A549 (cell line): ENCODE measurements at regions of chr4 and their contacts with region 1.

Region 1: GRCh38 chr4:47463235-47463956 is at the start of gene COMMD8:
- DNase-seq: peak; percentile 77 to 92
- ATAC-seq: peak; percentile 97 to 98
- H3K4me3 ChIP-seq: peak within 1 kb of the TSS; percentile 64
- H3K27ac ChIP-seq: peak within 1 kb of the TSS; percentile 94 to 97
- H3K4me1 ChIP-seq: no peaks in the 10 kb centered on the region
- CTCF ChIP-seq: no peak
- EP300 ChIP-seq: no peak
- POLR2A ChIP-seq: peak; percentile 71
- RAD21 ChIP-seq: no peak
- polyA plus RNA-seq, gene COMMD8: 17.6 and 24.0 TPM in 2 replicates

Region 2: GRCh38 chr4:47485047-47485692 is 21.8 kb after region 1 on chr4 and contains the start of gene ATP10D:
- CTCF ChIA-PET with region 1: interaction called, 6 read pairs
- POLR2A ChIA-PET with region 1: interaction called, 18 read pairs
- DNase-seq: peak; percentile 62 to 88
- ATAC-seq: peak; percentile 100
- H3K4me3 ChIP-seq: peak within 1 kb of the TSS; percentile 71
- H3K27ac ChIP-seq: peak within 1 kb of the TSS; percentile 79 to 92
- H3K4me1 ChIP-seq: no peaks in the 10 kb centered on the region
- CTCF ChIP-seq: no peak
- EP300 ChIP-seq: no peak
- POLR2A ChIP-seq: peak; percentile 71
- RAD21 ChIP-seq: no peak; a peak in 1 of 5 replicates
- polyA plus RNA-seq, gene ATP10D: 6.3 and 6.8 TPM in 2 replicates

Region 3: GRCh38 chr4:47519239-47519883 is 56.0 kb after region 1 on chr4:
- CTCF ChIA-PET with region 1: no interaction called
- POLR2A ChIA-PET with region 1: no interaction called
- DNase-seq: no peak
- ATAC-seq: no peak
- H3K4me3 ChIP-seq: no peak overlapping the region
- H3K27ac ChIP-seq: no peak overlapping the region
- H3K4me1 ChIP-seq: no peaks in the 10 kb centered on the region
- CTCF ChIP-seq: no peak
- EP300 ChIP-seq: no peak
- POLR2A ChIP-seq: no peak
- RAD21 ChIP-seq: no peak

Region 4: GRCh38 chr4:47763279-47763678 is 299.9 kb after region 1 on chr4:
- CTCF ChIA-PET with region 1: no interaction called
- POLR2A ChIA-PET with region 1: no interaction called
- DNase-seq: no peak
- ATAC-seq: no peak
- H3K4me3 ChIP-seq: no peak overlapping the region
- H3K27ac ChIP-seq: no peak overlapping the region
- H3K4me1 ChIP-seq: no peaks in the 10 kb centered on the region
- CTCF ChIP-seq: no peak
- EP300 ChIP-seq: no peak
- POLR2A ChIP-seq: no peak
- RAD21 ChIP-seq: no peak

Region 5: GRCh38 chr4:47786958-47787370 is 323.6 kb after region 1 on chr4:
- CTCF ChIA-PET with region 1: no interaction called
- POLR2A ChIA-PET with region 1: no interaction called
- DNase-seq: no peak
- ATAC-seq: no peak
- H3K4me3 ChIP-seq: no peak overlapping the region
- H3K27ac ChIP-seq: no peak overlapping the region
- H3K4me1 ChIP-seq: no peaks in the 10 kb centered on the region
- CTCF ChIP-seq: no peak
- EP300 ChIP-seq: no peak
- POLR2A ChIP-seq: no peak
- RAD21 ChIP-seq: no peak